ENCODE measurements at regions of chr2 and their contacts with region 1.

Region 1: DNA sequence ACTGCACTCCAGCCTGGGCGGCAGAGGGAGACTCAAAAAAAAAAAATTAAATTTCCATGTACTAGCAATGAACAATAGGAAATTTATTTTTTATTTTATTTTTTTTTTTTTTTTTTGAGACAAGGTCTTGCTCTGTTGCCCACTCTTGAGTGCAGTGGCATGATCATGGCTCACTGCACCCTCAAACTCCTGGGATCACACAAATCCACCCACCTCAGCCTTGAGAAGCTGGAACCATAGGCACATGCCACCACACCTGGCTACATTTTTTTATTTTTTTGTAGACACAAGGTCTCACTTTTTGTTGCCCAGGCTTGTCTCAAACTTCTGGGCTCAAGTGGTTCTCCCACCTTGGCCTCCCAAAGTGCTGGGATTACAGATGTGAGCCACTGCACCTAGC is 16.9 kb downstream of the CNOT9 start:
- DNase-seq: no peak
- H3K4me3 ChIP-seq: no peak overlapping the region
- H3K27ac ChIP-seq: no peak overlapping the region
- H3K4me1 ChIP-seq: no peaks in the 10 kb centered on the region
- H3K27me3 ChIP-seq: no peaks in the 10 kb centered on the region
- CTCF ChIP-seq: no peak
- POLR2A ChIP-seq: no peak

Region 2: GRCh38 chr2:218329027-218329825 is 256.3 kb before region 1 on chr2:
- intact Hi-C with region 1: no loop called
- DNase-seq: no peak
- H3K4me3 ChIP-seq: no peak overlapping the region
- H3K27ac ChIP-seq: peak overlapping the region; percentile 39 to 55
- H3K4me1 ChIP-seq: peaks cover 7% of the 10 kb centered on the region
- H3K27me3 ChIP-seq: no peaks in the 10 kb centered on the region
- CTCF ChIP-seq: no peak
- POLR2A ChIP-seq: no peak

Region 3: DNA sequence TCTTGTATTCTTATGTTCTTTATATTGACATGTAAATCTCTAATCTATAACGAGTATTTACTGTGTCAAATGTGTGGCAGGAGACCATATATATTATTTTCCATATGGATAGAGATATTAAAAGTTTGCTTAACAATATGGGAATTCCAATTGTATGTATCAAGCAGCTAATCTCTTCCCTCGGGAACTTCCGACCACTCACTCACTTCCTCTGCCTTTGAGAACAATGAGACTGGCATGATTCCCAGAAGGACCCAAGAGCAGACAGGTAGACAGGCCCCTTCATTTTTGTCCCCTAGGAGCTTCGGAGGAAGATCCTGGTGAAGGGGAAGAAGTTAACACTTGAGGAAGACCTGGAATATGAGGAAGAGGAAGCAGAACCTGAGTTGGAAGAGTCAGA is 46.3 kb after region 1 on chr2:
- intact Hi-C with region 1: loop called (anchors 5 kb)
- DNase-seq: no peak
- H3K4me3 ChIP-seq: no peak overlapping the region
- H3K27ac ChIP-seq: no peak overlapping the region
- H3K4me1 ChIP-seq: no peaks in the 10 kb centered on the region
- H3K27me3 ChIP-seq: no peaks in the 10 kb centered on the region
- CTCF ChIP-seq: no peak
- POLR2A ChIP-seq: no peak

Region 4: GRCh38 chr2:218671097-218671653 is 85.6 kb after region 1 on chr2:
- intact Hi-C with region 1: no loop called
- DNase-seq: no peak
- H3K4me3 ChIP-seq: peak overlapping the region; percentile 48 to 73
- H3K27ac ChIP-seq: peak overlapping the region; percentile 56 to 65
- H3K4me1 ChIP-seq: peaks cover 4% of the 10 kb centered on the region
- H3K27me3 ChIP-seq: no peaks in the 10 kb centered on the region
- CTCF ChIP-seq: no peak
- POLR2A ChIP-seq: no peak